ENCODE measurements at regions of chr12 and their contacts with region 1.

Region 1: DNA sequence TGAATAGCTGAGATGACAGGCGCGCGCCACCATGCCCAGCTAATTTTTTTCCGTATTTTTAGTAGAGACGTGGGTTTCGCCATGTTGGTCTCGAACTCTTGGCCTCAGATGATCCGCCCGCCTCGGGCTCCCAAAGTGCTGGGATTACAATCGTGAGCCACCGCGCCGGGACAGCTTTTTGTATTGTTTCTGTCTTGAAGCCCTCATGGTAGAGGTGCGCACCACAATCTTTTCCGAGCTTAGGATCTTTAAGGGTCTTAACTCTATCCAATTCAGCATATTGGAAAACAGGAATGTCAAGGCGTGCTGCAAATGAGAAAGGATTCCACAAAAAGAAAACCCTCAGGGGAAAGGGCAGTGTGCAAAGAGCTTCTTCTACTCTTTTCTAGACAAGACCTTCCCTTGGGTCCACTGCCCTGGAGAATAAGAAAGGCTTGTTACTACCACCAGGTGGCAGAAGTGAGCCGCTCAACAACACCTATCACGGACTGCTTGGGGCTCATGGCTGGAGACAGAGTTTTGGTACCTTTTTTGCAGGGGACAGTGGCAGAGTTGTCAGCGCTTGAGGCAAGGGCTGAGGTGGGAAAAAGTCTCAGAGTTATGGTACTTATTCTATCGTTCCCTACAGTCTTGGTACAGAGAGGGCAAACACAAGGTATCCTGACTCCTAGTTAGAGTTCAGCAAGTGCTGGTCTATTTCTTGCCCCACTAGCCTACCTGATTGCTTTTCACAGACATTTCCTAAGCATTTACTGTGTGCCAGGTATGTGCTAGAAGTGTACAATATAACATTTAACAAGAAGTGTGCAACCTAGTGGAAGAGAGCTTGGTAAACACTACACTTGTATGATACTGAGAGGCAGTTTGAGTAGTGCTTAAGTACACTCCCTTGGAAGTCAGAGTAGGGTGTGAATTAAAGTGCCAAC is 16.4 kb upstream of the SP7 start:
- DNase-seq: peak; percentile 79 to 96
- ATAC-seq: peak; percentile 98 to 100 (median 99)
- H3K4me3 ChIP-seq: no peak overlapping the region
- H3K4me3 Mint-ChIP-seq: no peak overlapping the region
- H3K27ac ChIP-seq: no peak overlapping the region
- H3K27ac Mint-ChIP-seq: peak overlapping the region in 1 of 2 donors; percentile 68
- H3K4me1 ChIP-seq: peaks cover 2% of the 10 kb centered on the region
- H3K4me1 Mint-ChIP-seq: peaks cover 7 to 8% of the 10 kb centered on the region in 2 donors
- H3K27me3 ChIP-seq: no peaks in the 10 kb centered on the region
- H3K27me3 Mint-ChIP-seq: no peaks in the 10 kb centered on the region
- CTCF ChIP-seq: peak; percentile 72

Region 2: GRCh38 chr12:52069327-52070184 is 1283.0 kb before region 1 on chr12 and contains the start of gene ATG101:
- intact Hi-C with region 1: no loop called
- DNase-seq: peak; percentile 84 to 95
- ATAC-seq: peak; percentile 93 to 99 (median 94)
- H3K4me3 ChIP-seq: peak within 1 kb of the TSS; percentile 95
- H3K4me3 Mint-ChIP-seq: peak within 1 kb of the TSS; percentile 96
- H3K27ac ChIP-seq: peak within 1 kb of the TSS; percentile 88
- H3K27ac Mint-ChIP-seq: peak within 1 kb of the TSS; percentile 95 to 98
- H3K4me1 ChIP-seq: peaks cover 34% of the 10 kb centered on the region
- H3K4me1 Mint-ChIP-seq: peaks cover 42 to 48% of the 10 kb centered on the region in 2 donors
- H3K27me3 ChIP-seq: no peaks in the 10 kb centered on the region
- H3K27me3 Mint-ChIP-seq: peaks cover 0 to 13% of the 10 kb centered on the region in 2 donors
- CTCF ChIP-seq: peak; percentile 63
- total RNA-seq, gene ATG101: 18.6 to 32.8 (median 23.3) TPM

Region 3: DNA sequence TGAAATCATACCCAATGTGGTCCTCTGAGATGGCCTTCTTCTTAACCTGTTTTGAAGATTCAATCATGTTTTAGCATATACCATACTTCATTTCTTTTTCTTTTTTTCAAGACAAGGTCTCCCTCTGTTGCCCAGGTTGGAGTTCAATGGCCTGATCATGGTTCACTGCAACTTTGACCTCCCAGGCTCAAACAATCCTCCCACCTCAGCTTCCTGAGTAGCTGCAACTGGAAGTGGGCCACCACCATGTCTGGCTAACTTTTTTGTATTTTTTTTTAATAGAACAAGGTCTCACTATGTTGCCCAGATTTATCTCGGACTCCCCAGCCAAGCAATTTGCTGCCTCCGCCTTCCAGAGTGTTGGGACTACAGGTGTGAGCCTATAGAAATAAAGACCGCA is 218.9 kb before region 1 on chr12:
- intact Hi-C with region 1: no loop called
- DNase-seq: no peak
- ATAC-seq: no peak
- H3K4me3 ChIP-seq: no peak overlapping the region
- H3K4me3 Mint-ChIP-seq: no peak overlapping the region
- H3K27ac ChIP-seq: no peak overlapping the region
- H3K27ac Mint-ChIP-seq: no peak overlapping the region
- H3K4me1 ChIP-seq: no peaks in the 10 kb centered on the region
- H3K4me1 Mint-ChIP-seq: no peaks in the 10 kb centered on the region
- H3K27me3 ChIP-seq: no peaks in the 10 kb centered on the region
- H3K27me3 Mint-ChIP-seq: peaks cover 0 to 11% of the 10 kb centered on the region in 2 donors
- CTCF ChIP-seq: no peak

Region 4: DNA sequence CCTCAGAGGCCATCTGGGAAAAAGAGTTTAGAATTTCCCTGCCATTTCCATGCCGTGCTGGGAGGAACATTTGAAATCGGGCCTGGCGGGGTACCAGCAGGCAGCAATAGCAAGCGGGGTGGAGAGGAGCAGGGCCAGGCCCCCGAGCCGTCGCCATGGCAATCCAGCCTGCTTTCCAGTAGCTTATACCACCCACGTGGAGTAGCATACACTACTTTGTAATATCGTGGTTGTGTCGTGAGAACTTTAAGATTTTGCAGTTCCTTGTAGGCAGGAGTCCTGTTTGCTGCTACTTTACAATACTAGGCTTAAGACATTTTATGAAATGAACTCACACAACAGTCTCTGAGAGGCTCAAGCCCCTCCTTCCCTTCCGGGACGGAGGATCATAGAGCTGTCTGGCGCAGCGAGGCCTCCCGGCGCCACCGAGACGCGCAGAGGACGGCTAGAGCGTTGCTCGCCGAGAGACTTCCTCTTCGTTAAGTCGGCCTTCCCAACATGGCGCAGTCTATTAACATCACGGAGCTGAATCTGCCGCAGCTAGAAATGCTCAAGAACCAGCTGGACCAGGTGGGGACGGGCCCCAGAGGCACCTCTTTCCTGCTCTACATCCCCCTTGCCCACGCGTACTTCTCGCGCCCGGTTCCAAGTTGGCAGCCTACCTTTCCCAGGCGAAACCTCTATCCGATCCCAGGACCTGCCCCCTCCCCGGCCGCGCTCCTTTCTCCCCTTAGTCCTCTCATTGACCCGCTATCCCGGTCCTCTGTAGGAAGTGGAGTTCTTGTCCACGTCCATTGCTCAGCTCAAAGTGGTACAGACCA is 57.3 kb before region 1 on chr12 and contains the start of gene PFDN5:
- intact Hi-C with region 1: no loop called
- DNase-seq: peak; percentile 77 to 95
- ATAC-seq: peak; percentile 90 to 97 (median 92)
- H3K4me3 ChIP-seq: peak within 1 kb of the TSS; percentile 79
- H3K4me3 Mint-ChIP-seq: peak within 1 kb of the TSS; percentile 96
- H3K27ac ChIP-seq: peak within 1 kb of the TSS; percentile 75
- H3K27ac Mint-ChIP-seq: peak within 1 kb of the TSS; percentile 95 to 98
- H3K4me1 ChIP-seq: peaks cover 36% of the 10 kb centered on the region
- H3K4me1 Mint-ChIP-seq: peaks cover 42 to 46% of the 10 kb centered on the region in 2 donors
- H3K27me3 ChIP-seq: no peaks in the 10 kb centered on the region
- H3K27me3 Mint-ChIP-seq: no peaks in the 10 kb centered on the region
- CTCF ChIP-seq: no peak
- total RNA-seq, gene PFDN5: 365 to 450 (median 439) TPM

Region 5: GRCh38 chr12:53424626-53425514 is 72.3 kb after region 1 on chr12:
- intact Hi-C with region 1: loop called (anchors 1 kb)
- DNase-seq: no peak
- ATAC-seq: no peak
- H3K4me3 ChIP-seq: no peak overlapping the region
- H3K4me3 Mint-ChIP-seq: no peak overlapping the region
- H3K27ac ChIP-seq: no peak overlapping the region
- H3K27ac Mint-ChIP-seq: no peak overlapping the region
- H3K4me1 ChIP-seq: peaks cover 4% of the 10 kb centered on the region
- H3K4me1 Mint-ChIP-seq: peaks cover 0 to 6% of the 10 kb centered on the region in 2 donors
- H3K27me3 ChIP-seq: no peaks in the 10 kb centered on the region
- H3K27me3 Mint-ChIP-seq: no peaks in the 10 kb centered on the region
- CTCF ChIP-seq: no peak